Caco-2 (cell line): ENCODE measurements at regions of chr14 and their contacts with region 1.

Region 1: DNA sequence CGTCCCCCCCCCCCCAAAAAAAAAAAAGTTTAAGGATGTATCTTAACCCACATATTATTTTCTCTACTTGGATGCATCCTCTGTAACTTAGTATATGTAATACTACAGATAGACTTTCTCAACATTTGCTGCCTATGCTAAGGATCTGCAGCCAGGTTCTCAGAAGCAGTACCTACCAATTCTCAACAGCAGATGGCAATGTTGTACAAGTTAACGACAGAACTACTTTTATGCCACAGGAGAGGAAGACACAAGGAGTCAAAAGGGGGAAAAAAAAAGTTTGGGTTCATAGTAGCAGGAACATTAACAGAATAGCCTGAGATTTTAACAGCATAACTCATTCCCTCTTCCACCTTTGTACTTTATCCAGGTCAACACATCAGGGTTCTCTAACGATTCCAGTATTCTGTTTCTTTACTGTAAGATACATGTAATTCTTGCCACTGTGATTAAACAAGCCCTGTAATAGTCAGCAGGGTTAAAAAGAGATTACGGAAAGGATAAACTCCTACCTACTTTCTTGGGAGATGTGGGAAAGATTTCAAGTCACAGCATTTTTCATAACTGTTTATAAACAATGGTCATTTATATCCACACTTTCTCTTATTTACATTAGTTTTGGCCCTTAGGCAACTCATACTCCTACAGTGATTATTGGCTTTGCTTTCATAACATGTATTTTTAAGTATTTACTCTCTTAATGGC is 5.7 kb upstream of the NEK9 start:
- DNase-seq: peak; percentile 62 to 80
- H3K4me3 ChIP-seq: no peak overlapping the region
- H3K4me3 Mint-ChIP-seq: no peak overlapping the region
- H3K27ac Mint-ChIP-seq: peak overlapping the region; percentile 51
- H3K4me1 ChIP-seq: 0 out of 2 replicates have a peak, but pooled peaks cover 7% of the 10 kb centered on the region
- H3K4me1 Mint-ChIP-seq: no peaks in the 10 kb centered on the region
- H3K27me3 ChIP-seq: no peaks in the 10 kb centered on the region
- H3K27me3 Mint-ChIP-seq: no peaks in the 10 kb centered on the region
- CTCF ChIP-seq: peak; percentile 62 to 75

Region 2: DNA sequence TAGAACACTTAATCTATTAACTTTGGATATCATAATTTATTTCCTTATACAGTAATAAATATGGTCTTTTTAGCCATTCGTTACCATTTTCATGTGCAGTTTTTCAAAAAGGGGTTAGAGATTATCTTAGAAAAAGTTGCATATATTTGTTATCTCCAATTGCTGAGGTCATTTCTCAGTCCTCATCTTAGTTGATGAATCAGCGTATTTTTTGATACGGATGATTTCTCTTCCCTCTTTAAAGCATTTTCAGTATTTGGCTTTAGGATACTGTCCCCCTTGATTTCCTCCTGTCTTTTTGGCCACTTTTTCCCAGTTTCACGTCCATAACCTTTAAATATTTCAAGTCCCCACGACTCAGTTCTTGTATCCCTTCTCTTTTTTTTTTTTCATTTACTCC is 1466.0 kb before region 1 on chr14:
- CTCF ChIA-PET with region 1: no interaction called
- POLR2A ChIA-PET with region 1: no interaction called
- intact Hi-C with region 1: no loop called
- DNase-seq: no peak
- H3K4me3 ChIP-seq: no peak overlapping the region
- H3K4me3 Mint-ChIP-seq: no peak overlapping the region
- H3K27ac Mint-ChIP-seq: no peak overlapping the region
- H3K4me1 ChIP-seq: peaks cover 17% of the 10 kb centered on the region
- H3K4me1 Mint-ChIP-seq: peaks cover 22% of the 10 kb centered on the region
- H3K27me3 ChIP-seq: no peaks in the 10 kb centered on the region
- H3K27me3 Mint-ChIP-seq: no peaks in the 10 kb centered on the region
- CTCF ChIP-seq: no peak

Region 3: DNA sequence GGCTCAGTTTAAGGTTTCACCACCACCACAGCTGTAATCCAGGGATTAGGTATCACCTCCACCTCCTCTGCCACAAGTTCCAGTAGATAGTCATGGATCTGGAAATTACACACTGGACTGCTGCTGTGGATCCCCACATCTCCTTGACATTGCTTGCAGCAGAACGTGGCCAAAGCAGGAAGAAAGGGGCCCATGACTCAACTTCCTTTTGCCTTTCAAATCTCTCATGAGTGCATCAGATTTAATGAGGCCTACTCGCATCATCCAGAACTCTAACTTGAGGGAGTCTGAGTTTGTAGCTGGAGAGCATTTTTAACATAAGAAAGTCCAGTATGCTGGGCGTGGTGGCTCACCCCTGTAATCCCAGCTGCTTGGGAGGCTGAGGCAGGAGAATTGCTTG is 73.1 kb after region 1 on chr14:
- CTCF ChIA-PET with region 1: no interaction called
- POLR2A ChIA-PET with region 1: interaction called, 7 read pairs
- intact Hi-C with region 1: loop called (anchors 2 kb)
- DNase-seq: no peak
- H3K4me3 ChIP-seq: no peak overlapping the region
- H3K4me3 Mint-ChIP-seq: no peak overlapping the region
- H3K27ac Mint-ChIP-seq: no peak overlapping the region
- H3K4me1 ChIP-seq: peaks cover 13% of the 10 kb centered on the region
- H3K4me1 Mint-ChIP-seq: peaks cover 18% of the 10 kb centered on the region
- H3K27me3 ChIP-seq: no peaks in the 10 kb centered on the region
- H3K27me3 Mint-ChIP-seq: no peaks in the 10 kb centered on the region
- CTCF ChIP-seq: no peak